Mammary epithelial cell (primary cell): ENCODE measurements at regions of chr12 and their contacts with region 1.

Region 1: GRCh38 chr12:127230843-127231260 is 1036.1 kb upstream of the TMEM132C start:
- DNase-seq: peak; percentile 99
- H3K4me3 ChIP-seq: no peak overlapping the region
- H3K27ac ChIP-seq: peak overlapping the region; percentile 88
- H3K4me1 ChIP-seq: peaks cover 35% of the 10 kb centered on the region
- H3K27me3 ChIP-seq: no peaks in the 10 kb centered on the region
- CTCF ChIP-seq: no peak

Region 2: DNA sequence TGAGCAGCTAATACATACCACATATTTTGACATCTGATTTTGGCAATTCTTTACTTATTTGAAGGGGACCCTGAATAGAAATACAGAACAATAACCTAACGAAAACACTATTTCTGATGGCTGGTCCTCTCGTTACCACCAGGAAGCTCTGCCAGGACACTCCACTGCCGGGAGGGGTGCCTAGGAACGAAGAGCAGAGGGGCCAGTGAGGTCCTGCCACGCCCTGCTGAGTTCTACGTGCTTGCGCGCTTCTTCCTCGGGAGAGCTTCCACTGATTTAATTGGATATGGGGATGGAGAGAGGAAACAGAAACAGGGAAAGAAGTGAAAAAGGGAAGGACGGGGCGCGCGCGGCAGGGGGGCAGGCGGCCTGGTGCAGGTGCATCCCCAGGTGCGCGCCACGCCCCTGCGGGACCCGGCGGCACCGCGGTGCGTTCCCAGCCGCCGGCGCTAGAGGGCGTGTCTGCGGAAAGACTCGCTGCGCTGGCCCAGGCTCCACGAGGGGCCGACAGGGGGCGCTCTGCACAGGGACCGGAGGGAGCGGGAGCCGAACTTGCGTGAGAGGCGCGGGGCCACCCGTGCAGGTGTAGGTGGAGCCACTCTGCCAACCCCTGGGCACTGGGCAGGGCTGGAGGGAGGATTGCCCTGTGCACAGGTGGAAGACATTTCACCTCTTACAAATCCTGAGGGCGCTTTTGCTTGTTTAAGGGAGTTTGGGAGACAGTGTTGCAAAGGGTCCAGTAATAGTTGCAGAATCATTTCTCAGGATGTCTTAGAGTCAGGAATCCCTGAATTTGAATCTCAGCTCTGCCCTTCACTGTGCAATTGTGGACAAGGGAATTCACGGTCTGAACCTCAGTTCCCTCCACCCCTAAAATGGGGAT is 49.8 kb after region 1 on chr12:
- CTCF ChIA-PET with region 1: interaction called, 6 read pairs
- dilution Hi-C with region 1: loop called (anchors 5 kb)
- in situ Hi-C with region 1: no loop called
- intact Hi-C with region 1: loop called (anchors 1 kb)
- DNase-seq: peak; percentile 39
- H3K4me3 ChIP-seq: no peak overlapping the region
- H3K27ac ChIP-seq: no peak overlapping the region
- H3K4me1 ChIP-seq: peaks cover 17% of the 10 kb centered on the region
- H3K27me3 ChIP-seq: no peaks in the 10 kb centered on the region
- CTCF ChIP-seq: peak; percentile 91 to 92